ENCODE measurements at regions of chr11 and their contacts with region 1.

Region 1: DNA sequence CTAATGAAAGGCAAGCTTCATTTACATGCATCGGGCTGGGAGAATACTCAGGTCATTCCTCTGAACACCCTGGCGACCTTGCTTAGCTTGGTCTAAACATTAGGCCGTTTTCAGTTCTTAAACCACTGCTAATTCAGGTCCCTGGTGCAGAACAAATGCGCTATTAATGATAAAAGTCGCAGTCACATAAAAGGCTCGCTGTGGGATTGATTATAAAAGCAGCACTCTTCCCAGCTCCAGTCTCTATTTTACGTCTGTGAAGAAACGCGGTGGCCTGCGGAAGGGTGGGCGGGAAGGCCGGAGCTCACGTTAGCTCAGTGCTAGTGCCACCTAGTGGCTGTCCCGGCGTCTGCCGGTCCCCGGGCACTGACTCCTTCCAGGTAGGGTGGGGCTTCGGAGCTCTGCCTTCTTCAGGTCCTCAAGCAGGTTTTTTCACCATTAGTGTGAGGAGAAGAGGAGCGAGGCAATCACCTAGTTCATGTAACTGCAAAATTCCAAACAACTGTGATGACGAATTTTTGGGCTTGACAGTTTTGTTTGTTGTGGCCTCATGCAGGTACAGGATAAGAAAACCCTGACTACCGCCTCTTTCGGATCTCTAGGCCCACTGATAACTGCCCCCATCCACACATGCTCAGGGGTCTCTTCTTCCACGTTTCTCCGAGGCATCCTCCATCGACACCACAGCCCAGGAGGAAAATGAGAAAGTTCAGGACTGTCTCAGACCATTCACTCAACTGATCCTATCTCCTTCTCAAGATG is 66.5 kb upstream of the CLMP start:
- DNase-seq: peak; percentile 82
- H3K4me3 Mint-ChIP-seq: no peak overlapping the region
- H3K27ac Mint-ChIP-seq: no peak overlapping the region
- H3K4me1 Mint-ChIP-seq: no peaks in the 10 kb centered on the region
- H3K27me3 Mint-ChIP-seq: peaks cover 13% of the 10 kb centered on the region

Region 2: DNA sequence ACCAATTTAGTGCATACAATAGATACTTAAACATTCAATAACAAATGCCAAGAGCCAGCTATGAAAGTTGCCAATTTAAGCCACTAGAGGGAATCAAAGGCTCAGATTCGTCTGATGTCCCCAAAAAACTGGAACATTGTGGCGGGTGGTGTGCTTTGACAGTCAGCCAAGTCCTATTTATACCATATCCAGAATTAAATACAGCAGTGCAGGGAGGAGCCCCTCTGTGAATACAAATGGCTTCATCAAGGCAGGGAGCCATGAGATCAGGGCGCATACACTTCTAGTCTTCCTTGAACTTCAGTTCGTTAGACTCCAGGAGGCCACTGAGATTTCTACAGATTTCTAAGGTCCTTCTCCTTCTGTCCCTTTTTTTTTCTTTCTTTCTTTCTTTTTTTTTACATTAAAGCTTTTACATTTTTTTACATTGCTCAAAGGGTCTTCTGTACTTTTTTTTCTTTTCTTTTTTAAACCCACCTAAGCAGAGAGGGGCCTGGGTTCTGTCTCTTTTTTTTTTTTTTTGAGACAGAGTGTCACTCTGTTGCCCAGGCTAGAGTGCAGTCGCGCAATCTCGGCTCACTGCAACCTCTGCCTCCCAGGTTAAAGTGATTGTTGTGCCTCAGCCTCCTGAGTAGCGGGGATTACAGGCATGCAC is 158.1 kb before region 1 on chr11:
- CTCF ChIA-PET with region 1: interaction called, 36 read pairs
- POLR2A ChIA-PET with region 1: no interaction called
- intact Hi-C with region 1: no loop called
- DNase-seq: peak; percentile 42
- H3K4me3 Mint-ChIP-seq: no peak overlapping the region
- H3K27ac Mint-ChIP-seq: no peak overlapping the region
- H3K4me1 Mint-ChIP-seq: peaks cover 16% of the 10 kb centered on the region
- H3K27me3 Mint-ChIP-seq: no peaks in the 10 kb centered on the region

Region 3: DNA sequence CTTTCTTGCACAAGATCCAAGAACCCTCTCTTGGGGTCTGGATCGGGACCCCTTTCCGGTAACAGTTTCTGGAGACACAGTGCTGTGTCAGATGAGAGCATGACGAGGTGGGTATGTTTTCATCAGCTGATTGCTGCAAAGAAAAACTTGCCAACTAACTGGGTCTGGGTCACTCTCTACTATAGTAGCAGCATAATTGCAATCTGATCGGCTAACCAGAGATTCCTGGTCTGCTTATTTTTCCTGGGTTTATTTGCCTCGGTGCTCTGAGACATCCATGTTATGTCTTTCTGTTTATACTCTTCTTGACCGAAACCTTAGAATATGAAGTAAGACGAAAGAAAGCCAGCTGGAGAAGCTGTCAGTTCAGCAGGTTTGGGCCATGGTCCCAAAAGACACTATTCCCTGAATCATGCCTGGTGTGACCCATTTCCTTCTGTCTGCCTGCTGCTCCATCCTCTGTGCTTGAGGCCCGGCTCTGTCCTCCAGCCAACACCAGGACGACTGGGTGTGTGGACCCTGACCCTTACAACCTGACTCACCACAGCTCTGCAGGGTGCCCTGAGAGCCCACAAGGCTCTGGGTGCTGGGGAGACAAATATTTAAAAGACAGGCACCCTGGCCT is 42.3 kb before region 1 on chr11:
- CTCF ChIA-PET with region 1: no interaction called
- POLR2A ChIA-PET with region 1: no interaction called
- intact Hi-C with region 1: no loop called
- DNase-seq: no peak
- H3K4me3 Mint-ChIP-seq: no peak overlapping the region
- H3K27ac Mint-ChIP-seq: no peak overlapping the region
- H3K4me1 Mint-ChIP-seq: no peaks in the 10 kb centered on the region
- H3K27me3 Mint-ChIP-seq: peaks cover 8% of the 10 kb centered on the region

Region 4: GRCh38 chr11:123272565-123272964 is 11.0 kb after region 1 on chr11:
- CTCF ChIA-PET with region 1: interaction called, 18 read pairs
- POLR2A ChIA-PET with region 1: no interaction called
- intact Hi-C with region 1: no loop called
- DNase-seq: no peak
- H3K4me3 Mint-ChIP-seq: no peak overlapping the region
- H3K27ac Mint-ChIP-seq: no peak overlapping the region
- H3K4me1 Mint-ChIP-seq: no peaks in the 10 kb centered on the region
- H3K27me3 Mint-ChIP-seq: no peaks in the 10 kb centered on the region

Region 5: DNA sequence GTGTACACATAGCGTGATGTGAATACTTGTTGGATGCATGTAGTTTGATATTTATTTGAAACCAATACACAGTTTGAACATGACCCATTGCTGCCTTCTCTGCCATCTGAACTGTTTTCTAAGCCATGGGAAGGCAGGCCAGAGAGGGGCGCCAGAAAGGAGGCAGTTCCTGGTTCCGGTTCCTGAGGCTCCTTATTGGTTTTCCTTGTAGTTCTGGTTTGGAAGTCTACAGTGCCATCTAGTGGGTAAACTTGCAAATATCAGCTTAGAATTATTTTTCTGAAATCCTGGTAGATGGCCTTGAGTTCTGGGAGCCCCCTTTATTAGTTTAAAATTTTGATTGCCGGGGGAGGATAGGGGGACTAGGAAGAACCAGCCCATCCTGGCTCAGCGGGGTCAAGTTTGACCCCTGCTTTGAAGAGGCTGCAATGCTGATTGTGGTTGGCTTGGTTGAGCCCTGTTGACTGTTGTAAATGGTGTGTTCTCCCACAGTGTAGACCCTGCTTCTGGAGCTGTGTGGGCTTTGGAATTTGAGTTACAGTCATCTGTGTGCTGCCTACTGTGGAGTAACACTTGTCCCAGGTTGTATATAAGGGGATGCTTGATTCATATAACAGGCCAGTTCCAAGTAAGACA is 216.9 kb after region 1 on chr11:
- CTCF ChIA-PET with region 1: interaction called, 18 read pairs
- POLR2A ChIA-PET with region 1: no interaction called
- intact Hi-C with region 1: no loop called
- DNase-seq: peak; percentile 38
- H3K4me3 Mint-ChIP-seq: peak overlapping the region; percentile 27
- H3K27ac Mint-ChIP-seq: peak overlapping the region; percentile 56
- H3K4me1 Mint-ChIP-seq: peaks cover 43% of the 10 kb centered on the region
- H3K27me3 Mint-ChIP-seq: no peaks in the 10 kb centered on the region

Measured in activated CD4-positive, alpha-beta memory T cell treated with anti-CD3 and anti-CD28 coated beads for 36 hours (primary cell).